ENCODE measurements at regions of chr13 and their contacts with region 1.

Region 1: GRCh38 chr13:49679246-49679645 is 12.0 kb downstream of the EBPL start:
- DNase-seq: no peak
- H3K4me3 ChIP-seq: no peak overlapping the region
- H3K27ac ChIP-seq: no peak overlapping the region
- H3K4me1 ChIP-seq: no peaks in the 10 kb centered on the region
- H3K27me3 ChIP-seq: no peaks in the 10 kb centered on the region
- CTCF ChIP-seq: no peak

Region 2: GRCh38 chr13:48457578-48458242 is 1221.5 kb before region 1 on chr13:
- CTCF ChIA-PET with region 1: no interaction called
- POLR2A ChIA-PET with region 1: no interaction called
- intact Hi-C with region 1: no loop called
- DNase-seq: no peak
- H3K4me3 ChIP-seq: no peak overlapping the region
- H3K27ac ChIP-seq: no peak overlapping the region
- H3K4me1 ChIP-seq: no peaks in the 10 kb centered on the region
- H3K27me3 ChIP-seq: no peaks in the 10 kb centered on the region
- CTCF ChIP-seq: no peak

Region 3: DNA sequence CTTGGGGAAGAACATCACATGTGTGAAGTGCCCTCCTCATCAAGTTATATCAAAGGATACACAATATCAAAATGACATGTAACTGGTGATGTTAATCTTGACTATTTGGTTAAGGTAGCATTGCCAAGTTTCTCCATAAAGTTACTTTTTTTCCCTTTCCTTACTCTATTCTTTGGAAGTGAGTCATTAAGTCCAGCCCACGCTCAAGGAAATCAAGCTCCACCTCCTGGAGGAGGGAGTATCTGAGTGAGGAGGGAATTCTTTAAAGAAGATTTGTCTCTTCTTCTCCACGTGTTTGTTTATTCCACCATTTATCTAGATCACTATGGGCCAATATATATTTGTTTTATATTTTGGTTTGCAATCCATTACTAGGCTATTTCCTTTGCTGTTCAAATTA is 737.1 kb before region 1 on chr13:
- CTCF ChIA-PET with region 1: no interaction called
- POLR2A ChIA-PET with region 1: no interaction called
- intact Hi-C with region 1: no loop called
- DNase-seq: no peak
- H3K4me3 ChIP-seq: no peak overlapping the region
- H3K27ac ChIP-seq: no peak overlapping the region
- H3K4me1 ChIP-seq: no peaks in the 10 kb centered on the region
- H3K27me3 ChIP-seq: no peaks in the 10 kb centered on the region
- CTCF ChIP-seq: no peak

Region 4: DNA sequence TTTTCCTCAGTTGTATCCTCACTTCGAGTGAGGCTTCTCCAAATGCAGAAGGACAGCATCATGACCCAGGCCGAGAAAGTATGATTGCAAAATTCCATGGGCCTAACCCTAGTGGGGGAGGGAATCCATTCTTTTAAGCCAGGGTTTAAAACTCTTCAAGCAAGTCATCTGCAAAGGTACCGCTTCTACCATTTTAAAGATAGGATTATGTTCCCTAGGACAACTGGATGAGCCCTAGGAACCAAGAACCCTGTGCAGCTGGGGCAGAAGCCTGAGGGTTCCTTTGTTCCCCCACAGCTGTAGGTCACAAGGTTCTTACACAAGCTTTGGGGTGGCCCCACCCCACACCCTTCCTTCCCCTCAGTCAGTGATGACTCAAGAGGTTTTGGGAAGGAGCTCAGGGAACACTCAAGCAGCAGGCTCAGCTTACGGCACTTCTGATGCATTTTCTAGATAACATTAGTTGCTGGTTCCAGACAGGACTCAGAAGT is 37.4 kb before region 1 on chr13:
- CTCF ChIA-PET with region 1: no interaction called
- POLR2A ChIA-PET with region 1: interaction called, 19 read pairs
- intact Hi-C with region 1: no loop called
- DNase-seq: peak; percentile 46 to 73
- H3K4me3 ChIP-seq: no peak overlapping the region
- H3K27ac ChIP-seq: no peak overlapping the region
- H3K4me1 ChIP-seq: peaks cover 24% of the 10 kb centered on the region
- H3K27me3 ChIP-seq: no peaks in the 10 kb centered on the region
- CTCF ChIP-seq: no peak

Region 5: DNA sequence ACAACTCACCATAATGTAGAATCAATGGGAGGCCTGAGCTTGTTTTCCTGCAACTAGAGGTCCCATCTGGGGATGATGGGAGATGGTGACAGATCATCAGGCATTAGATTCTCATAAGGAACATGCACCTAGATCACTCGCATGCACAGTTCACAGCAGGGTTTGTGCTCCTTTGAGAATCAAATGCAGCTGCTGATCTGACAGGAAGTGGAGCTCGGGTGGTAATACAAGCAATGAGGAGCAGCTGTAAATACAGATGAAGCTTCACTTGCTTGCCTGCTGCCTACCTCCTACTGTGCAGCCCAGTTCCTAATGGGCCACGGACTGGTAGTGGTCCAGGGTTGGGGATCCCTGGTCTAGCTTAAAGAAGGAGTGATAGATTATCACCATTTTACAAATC is 80.3 kb after region 1 on chr13:
- CTCF ChIA-PET with region 1: no interaction called
- POLR2A ChIA-PET with region 1: no interaction called
- intact Hi-C with region 1: no loop called
- DNase-seq: no peak
- H3K4me3 ChIP-seq: no peak overlapping the region
- H3K27ac ChIP-seq: no peak overlapping the region
- H3K4me1 ChIP-seq: no peaks in the 10 kb centered on the region
- H3K27me3 ChIP-seq: no peaks in the 10 kb centered on the region
- CTCF ChIP-seq: no peak

Measured in PC-9 (cell line).